GM12878 (cell line): ENCODE measurements at regions of chr12 and their contacts with region 1.

Region 1: DNA sequence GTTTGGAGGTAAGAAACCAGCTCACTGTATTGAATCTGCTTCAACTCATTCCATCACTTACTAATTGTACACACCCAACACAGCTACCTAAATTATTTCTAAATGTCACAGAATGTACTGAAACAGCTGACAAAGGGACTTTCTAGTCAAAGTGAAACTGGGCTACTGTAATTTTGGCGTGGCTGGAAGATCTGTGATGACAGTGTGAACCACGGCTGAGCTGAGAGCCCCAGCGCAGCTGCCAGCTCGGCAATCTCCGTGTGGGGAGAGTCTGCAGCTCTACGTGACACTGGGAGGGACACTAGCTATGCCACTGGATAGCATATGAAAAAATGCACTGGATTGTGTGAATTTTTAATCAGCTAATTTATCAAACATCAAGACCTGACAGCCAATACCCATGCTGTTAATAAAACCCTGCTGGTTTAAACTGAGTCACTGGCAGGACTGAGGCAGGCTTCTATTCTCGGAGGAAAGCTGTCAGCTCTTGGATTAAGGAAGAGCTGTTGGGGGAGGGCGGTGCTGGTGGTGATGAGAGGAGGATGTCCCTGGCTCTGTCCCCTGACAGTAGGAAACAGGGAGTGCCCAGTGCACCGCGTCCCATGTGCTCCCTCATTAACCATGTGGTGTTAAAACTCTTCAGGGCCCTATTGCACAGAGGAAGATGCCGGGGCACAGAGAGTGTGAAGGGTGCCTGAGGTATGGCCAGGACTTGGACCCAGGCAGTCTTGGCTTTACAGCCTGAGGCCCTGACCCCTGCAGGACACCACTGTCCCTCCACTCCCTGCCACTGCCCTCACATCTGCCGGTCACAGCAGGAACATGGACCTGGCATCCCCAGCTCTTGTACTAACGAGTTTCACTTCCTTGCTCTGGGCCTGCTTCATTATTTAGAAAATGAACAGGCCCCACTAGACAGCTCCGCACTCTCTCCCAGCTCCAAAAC is 13.3 kb downstream of the SLC15A4 start:
- DNase-seq: peak; percentile 92
- ATAC-seq: peak; percentile 84
- H3K4me3 ChIP-seq: peak overlapping the region; percentile 55
- H3K27ac ChIP-seq: peak overlapping the region; percentile 94
- H3K4me1 ChIP-seq: peaks cover 61% of the 10 kb centered on the region
- H3K27me3 ChIP-seq: no peaks in the 10 kb centered on the region
- CTCF ChIP-seq: peak; percentile 10 to 31 (median 14); a peak in 1 of 6 replicates
- EP300 ChIP-seq: peak; percentile 64 to 93
- POLR2A ChIP-seq: peak; percentile 79
- RAD21 ChIP-seq: peak; percentile 32; the same call in 1 of the 2 replicates

Region 2: DNA sequence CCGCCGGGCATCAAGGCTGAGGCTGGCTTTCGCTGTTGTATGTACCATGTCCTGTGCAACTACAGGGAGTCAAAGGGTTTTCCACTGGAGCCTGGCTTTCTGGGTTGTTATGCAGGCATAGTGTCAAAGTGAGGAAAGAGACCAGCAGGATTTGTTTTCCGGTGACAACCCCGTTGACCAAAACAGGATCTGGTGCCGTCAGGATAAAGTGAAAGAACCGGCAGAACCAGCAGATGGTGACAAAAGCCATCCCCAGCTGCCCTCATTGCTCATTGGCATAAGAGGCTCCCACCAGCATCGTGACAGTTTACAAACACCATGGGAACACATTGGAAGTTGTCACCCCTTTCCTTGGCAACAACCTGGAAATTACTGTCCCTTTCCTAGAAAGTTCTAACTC is 67.5 kb before region 1 on chr12:
- CTCF ChIA-PET with region 1: no interaction called
- POLR2A ChIA-PET with region 1: no interaction called
- RAD21 ChIA-PET with region 1: no interaction called
- SMC1A ChIA-PET with region 1: no interaction called
- in situ Hi-C with region 1: no loop called
- intact Hi-C with region 1: no loop called
- DNase-seq: no peak
- ATAC-seq: no peak
- H3K4me3 ChIP-seq: no peak overlapping the region
- H3K27ac ChIP-seq: no peak overlapping the region
- H3K4me1 ChIP-seq: no peaks in the 10 kb centered on the region
- H3K27me3 ChIP-seq: 0 out of 4 replicates have a peak, but pooled peaks cover 0 to 1% of the 10 kb centered on the region in 2 experiments
- CTCF ChIP-seq: no peak; a peak in 1 of 6 replicates
- EP300 ChIP-seq: no peak
- POLR2A ChIP-seq: no peak
- RAD21 ChIP-seq: 0 out of 2 replicates have a peak, but pooled peaks have one; percentile 3

Region 3: DNA sequence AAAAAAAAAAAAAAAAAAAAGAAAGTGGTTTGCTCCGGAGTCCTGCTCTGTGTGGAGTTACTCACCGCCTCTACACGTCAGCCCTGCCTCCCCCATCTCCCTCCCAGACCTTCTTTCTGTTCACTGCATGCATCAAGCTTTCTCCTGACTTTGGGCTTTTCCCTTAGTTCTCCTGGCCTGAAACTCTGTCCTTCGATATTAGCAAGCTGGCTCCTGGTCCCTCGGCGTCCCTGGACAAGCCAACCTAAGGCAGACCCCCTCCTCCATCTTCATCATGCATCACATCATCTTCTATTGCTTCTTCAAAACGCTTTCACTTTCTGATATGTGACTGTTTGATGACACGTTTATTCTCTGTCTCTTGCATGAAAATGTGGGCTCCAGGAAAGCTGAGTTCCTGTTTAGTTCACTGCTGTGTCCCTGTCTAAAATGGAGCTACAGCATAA is 27.3 kb before region 1 on chr12:
- CTCF ChIA-PET with region 1: interaction called, 27 read pairs
- POLR2A ChIA-PET with region 1: interaction called, 8 read pairs
- RAD21 ChIA-PET with region 1: interaction called, 27 read pairs
- SMC1A ChIA-PET with region 1: interaction called, 31 read pairs
- in situ Hi-C with region 1: no loop called
- intact Hi-C with region 1: no loop called
- DNase-seq: no peak
- ATAC-seq: peak; percentile 83
- H3K4me3 ChIP-seq: no peak overlapping the region; the same call in 1 of the 2 replicates
- H3K27ac ChIP-seq: peak overlapping the region; percentile 47; the same call in 1 of the 2 replicates
- H3K4me1 ChIP-seq: no peaks in the 10 kb centered on the region; the same call in none of the 2 replicates
- H3K27me3 ChIP-seq: no peaks in the 10 kb centered on the region
- CTCF ChIP-seq: no peak
- EP300 ChIP-seq: no peak
- POLR2A ChIP-seq: no peak
- RAD21 ChIP-seq: no peak

Region 4: GRCh38 chr12:128789356-128789929 is 21.0 kb before region 1 on chr12:
- CTCF ChIA-PET with region 1: interaction called, 9 read pairs
- POLR2A ChIA-PET with region 1: interaction called, 253 read pairs
- RAD21 ChIA-PET with region 1: interaction called, 209 read pairs
- SMC1A ChIA-PET with region 1: interaction called, 261 read pairs
- in situ Hi-C with region 1: no loop called
- intact Hi-C with region 1: no loop called
- DNase-seq: no peak
- ATAC-seq: peak; percentile 43
- H3K4me3 ChIP-seq: no peak overlapping the region
- H3K27ac ChIP-seq: no peak overlapping the region
- H3K4me1 ChIP-seq: peaks cover 14% of the 10 kb centered on the region
- H3K27me3 ChIP-seq: no peaks in the 10 kb centered on the region
- CTCF ChIP-seq: no peak
- EP300 ChIP-seq: no peak
- POLR2A ChIP-seq: no peak
- RAD21 ChIP-seq: no peak

Region 5: DNA sequence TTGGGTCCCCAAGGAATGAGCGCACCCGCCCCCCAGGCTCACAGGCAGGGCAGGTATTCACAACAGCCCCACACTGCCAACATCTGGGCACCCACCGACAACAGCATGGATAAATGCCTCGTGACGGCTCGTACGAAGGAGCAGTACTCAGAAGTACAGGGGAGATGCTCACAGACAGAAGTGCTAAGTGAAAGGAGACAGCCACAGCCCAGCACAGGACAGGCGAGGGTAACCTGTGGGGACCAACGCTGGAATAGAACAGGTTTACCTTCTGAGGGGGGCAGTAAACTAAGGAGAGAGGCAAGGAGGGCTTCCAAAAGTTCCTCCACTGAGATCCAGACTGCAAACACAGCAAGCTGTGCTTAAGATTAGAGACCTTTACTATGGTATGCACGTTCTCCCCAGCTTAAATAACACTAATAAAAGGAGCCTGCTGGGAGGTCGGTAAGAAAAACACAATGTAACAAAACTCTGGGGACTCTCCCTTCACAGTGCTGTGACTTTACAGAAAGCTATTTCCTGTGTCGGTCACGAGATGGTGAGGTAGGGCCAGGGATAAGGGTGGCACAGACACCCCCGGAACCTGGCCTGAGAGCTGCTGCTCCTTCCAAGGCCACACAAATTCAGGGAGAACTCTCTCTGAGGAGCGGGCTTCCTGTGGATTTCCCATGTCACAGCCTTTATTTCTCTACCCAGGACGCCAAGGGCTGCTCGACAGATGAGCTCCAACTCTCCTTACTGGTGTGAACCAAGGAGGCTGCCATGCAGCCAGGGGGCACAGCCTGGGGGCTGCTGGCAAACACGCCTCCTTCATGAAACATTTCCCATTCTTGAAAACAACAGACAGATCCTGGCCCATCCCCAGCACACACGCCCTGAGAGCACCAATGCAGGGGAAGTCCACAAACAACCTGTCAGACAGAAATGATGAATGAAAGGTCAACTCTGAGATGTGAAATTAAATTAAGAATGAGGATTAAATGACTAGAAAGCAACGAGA is 13.0 kb before region 1 on chr12:
- CTCF ChIA-PET with region 1: interaction called, 70 read pairs
- POLR2A ChIA-PET with region 1: interaction called, 253 read pairs
- RAD21 ChIA-PET with region 1: interaction called, 209 read pairs
- SMC1A ChIA-PET with region 1: interaction called, 261 read pairs
- in situ Hi-C with region 1: no loop called
- intact Hi-C with region 1: loop called (anchors 1 kb)
- DNase-seq: no peak
- ATAC-seq: peak; percentile 82
- H3K4me3 ChIP-seq: peak overlapping the region; percentile 5; the same call in 1 of the 2 replicates
- H3K27ac ChIP-seq: peak overlapping the region; percentile 99
- H3K4me1 ChIP-seq: peaks cover 60% of the 10 kb centered on the region
- H3K27me3 ChIP-seq: no peaks in the 10 kb centered on the region
- CTCF ChIP-seq: no peak; a peak in 1 of 6 replicates
- EP300 ChIP-seq: peak in 1 of 2 experiments; percentile 26; a peak in 1 of 4 replicates
- POLR2A ChIP-seq: peak; percentile 39
- RAD21 ChIP-seq: peak; percentile 29; the same call in 1 of the 2 replicates

Region 6: GRCh38 chr12:128844031-128844635 is 33.7 kb after region 1 on chr12:
- CTCF ChIA-PET with region 1: no interaction called
- POLR2A ChIA-PET with region 1: interaction called, 7 read pairs
- RAD21 ChIA-PET with region 1: interaction called, 3 read pairs
- SMC1A ChIA-PET with region 1: interaction called, 6 read pairs
- in situ Hi-C with region 1: no loop called
- intact Hi-C with region 1: loop called (anchors 1 kb)
- DNase-seq: no peak
- ATAC-seq: peak; percentile 73
- H3K4me3 ChIP-seq: no peak overlapping the region
- H3K27ac ChIP-seq: no peak overlapping the region
- H3K4me1 ChIP-seq: peaks cover 32% of the 10 kb centered on the region
- H3K27me3 ChIP-seq: no peaks in the 10 kb centered on the region
- CTCF ChIP-seq: peak; percentile 24 to 44 (median 25); a peak in 3 of 6 replicates
- EP300 ChIP-seq: no peak
- POLR2A ChIP-seq: no peak
- RAD21 ChIP-seq: peak; percentile 40

Region 7: DNA sequence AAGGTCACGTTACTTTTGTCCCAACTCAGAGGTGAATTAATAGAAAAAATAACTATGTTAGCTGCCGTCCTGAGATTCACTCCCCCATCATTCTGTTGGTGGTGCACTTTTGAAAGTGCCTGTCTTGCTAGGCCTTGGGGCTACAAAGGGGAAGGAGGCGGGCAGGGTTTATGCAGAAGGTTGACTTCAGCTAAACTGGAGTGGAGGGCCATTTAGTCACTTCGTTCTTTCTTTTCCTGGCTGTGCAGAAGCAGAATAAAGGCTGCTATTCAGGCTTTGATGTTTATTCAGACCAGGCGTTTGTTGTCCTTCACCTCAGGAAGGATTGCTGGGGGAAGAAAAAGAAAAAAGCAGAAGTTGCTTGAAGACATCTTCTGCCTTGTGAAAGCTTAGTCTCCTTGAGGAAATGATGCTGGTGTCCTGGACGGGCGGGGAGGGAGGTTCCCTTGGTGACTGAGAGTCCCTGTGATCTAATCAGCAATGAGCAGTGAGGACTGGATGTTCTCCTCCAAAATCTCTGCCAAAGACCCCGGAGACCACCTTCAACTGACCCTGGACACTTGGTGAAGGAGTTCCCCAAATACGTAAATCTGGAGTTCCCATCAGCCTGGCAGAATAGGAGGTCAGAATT is 46.8 kb after region 1 on chr12:
- CTCF ChIA-PET with region 1: interaction called, 8 read pairs
- POLR2A ChIA-PET with region 1: interaction called, 6 read pairs
- RAD21 ChIA-PET with region 1: interaction called, 7 read pairs
- SMC1A ChIA-PET with region 1: interaction called, 13 read pairs
- in situ Hi-C with region 1: no loop called
- intact Hi-C with region 1: no loop called
- DNase-seq: peak; percentile 31
- ATAC-seq: peak; percentile 17
- H3K4me3 ChIP-seq: no peak overlapping the region
- H3K27ac ChIP-seq: no peak overlapping the region
- H3K4me1 ChIP-seq: peaks cover 11% of the 10 kb centered on the region; the same call in 1 of the 2 replicates
- H3K27me3 ChIP-seq: no peaks in the 10 kb centered on the region
- CTCF ChIP-seq: no peak
- EP300 ChIP-seq: no peak
- POLR2A ChIP-seq: no peak
- RAD21 ChIP-seq: no peak

Region 8: GRCh38 chr12:128914908-128915563 is 104.6 kb after region 1 on chr12:
- CTCF ChIA-PET with region 1: interaction called, 4 read pairs
- POLR2A ChIA-PET with region 1: interaction called, 14 read pairs
- RAD21 ChIA-PET with region 1: interaction called, 9 read pairs
- SMC1A ChIA-PET with region 1: interaction called, 5 read pairs
- in situ Hi-C with region 1: no loop called
- intact Hi-C with region 1: no loop called
- DNase-seq: peak; percentile 88
- ATAC-seq: peak; percentile 95
- H3K4me3 ChIP-seq: no peak overlapping the region
- H3K27ac ChIP-seq: no peak overlapping the region
- H3K4me1 ChIP-seq: peaks cover 9% of the 10 kb centered on the region; the same call in 1 of the 2 replicates
- H3K27me3 ChIP-seq: no peaks in the 10 kb centered on the region
- CTCF ChIP-seq: no peak
- EP300 ChIP-seq: peak; percentile 95 to 98
- POLR2A ChIP-seq: no peak
- RAD21 ChIP-seq: no peak